Mammary epithelial cell (primary cell): ENCODE measurements at regions of chr7 and their contacts with region 1.

Region 1: DNA sequence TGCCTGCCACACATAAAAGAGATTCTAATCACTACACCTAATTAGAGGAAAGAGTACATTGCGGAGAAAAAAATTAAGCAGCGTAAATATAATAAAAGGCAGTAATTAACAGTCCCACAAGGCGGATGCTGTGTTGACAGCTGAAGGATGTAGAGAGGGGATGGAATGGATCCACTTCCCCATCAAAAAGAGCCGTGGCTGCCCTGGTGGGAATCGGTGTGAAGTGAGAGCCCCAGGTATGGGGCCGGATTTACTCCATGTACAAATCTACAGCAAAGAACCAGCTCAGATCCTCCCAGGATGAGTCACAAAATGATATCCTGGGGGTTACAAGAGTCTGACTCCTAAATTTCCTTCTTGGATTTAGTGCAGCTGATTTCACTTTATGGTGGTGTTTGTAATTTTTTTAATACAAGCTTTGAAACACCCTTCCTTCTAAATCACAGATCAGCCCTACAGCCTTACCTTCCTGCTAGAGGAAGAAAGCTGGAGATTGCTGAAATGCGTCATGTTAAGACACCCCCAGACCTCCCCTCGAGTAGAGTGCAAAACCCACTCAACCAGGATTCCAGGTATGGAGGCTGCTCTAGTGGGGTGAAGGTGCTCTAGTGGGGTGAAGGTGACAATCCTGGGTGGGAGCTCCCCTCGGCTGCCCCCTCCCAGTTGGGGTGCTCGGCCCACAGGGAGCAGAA is 398.4 kb downstream of the PLXNA4 start:
- DNase-seq: no peak
- H3K4me3 ChIP-seq: no peak overlapping the region
- H3K27ac ChIP-seq: no peak overlapping the region
- H3K4me1 ChIP-seq: no peaks in the 10 kb centered on the region
- H3K27me3 ChIP-seq: no peaks in the 10 kb centered on the region
- CTCF ChIP-seq: no peak

Region 2: DNA sequence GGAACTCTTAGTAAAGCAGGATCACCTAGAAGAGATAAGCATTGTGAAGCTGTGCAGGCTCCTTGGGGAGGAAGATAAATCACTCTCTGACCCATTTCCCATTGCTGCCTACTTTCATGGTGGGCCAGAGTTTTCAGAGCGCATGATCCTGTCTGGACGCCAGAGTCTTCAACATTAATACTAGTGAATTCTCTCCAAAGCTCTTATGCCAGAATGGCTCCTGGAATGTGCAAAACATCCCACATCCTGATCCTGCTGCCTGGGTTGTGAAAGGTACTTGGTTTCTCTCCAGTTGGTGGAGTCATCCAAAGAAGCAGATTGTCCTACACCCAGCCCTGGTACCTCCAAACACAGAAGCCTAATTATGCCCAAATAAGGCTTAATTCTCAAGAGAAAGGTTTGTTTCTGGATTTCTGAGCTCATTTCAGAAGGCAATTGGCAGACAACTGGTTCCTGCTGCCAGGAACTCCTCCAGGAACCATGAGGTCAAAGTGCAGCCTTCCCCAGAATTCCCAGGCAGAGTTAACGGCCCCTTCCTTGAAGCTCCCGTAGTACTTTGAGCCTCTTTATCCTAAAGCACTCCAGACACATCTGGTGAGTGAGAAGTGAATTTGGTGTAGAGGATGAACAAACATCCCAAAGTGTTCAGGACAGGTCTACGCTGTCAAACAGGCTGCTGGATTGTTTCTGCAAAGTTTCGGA is 96.7 kb before region 1 on chr7:
- CTCF ChIA-PET with region 1: no interaction called
- dilution Hi-C with region 1: loop called (anchors 5 kb)
- in situ Hi-C with region 1: no loop called
- intact Hi-C with region 1: no loop called
- DNase-seq: no peak
- H3K4me3 ChIP-seq: no peak overlapping the region
- H3K27ac ChIP-seq: no peak overlapping the region
- H3K4me1 ChIP-seq: no peaks in the 10 kb centered on the region
- H3K27me3 ChIP-seq: no peaks in the 10 kb centered on the region
- CTCF ChIP-seq: no peak

Region 3: DNA sequence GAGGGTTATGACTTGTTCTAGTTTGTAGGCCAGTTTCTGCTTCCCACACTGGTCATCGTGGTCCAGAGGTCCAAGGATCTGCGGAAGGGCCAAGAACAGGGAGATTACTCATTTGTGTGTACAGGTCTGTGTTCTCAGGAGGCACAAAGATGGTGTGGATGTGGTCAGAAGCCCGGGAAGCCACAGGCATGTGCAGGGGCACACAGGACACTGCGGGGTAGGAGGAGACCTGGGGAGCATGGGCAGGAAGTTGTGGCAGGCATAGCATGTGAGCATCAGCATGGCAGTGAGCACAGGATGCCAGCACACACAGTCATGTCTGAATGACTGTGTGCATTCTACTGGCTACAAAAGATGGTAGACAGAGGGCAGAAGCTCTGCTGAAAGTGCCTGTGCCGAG is 47.4 kb before region 1 on chr7:
- CTCF ChIA-PET with region 1: no interaction called
- dilution Hi-C with region 1: no loop called
- in situ Hi-C with region 1: no loop called
- intact Hi-C with region 1: no loop called
- DNase-seq: peak; percentile 67
- H3K4me3 ChIP-seq: no peak overlapping the region
- H3K27ac ChIP-seq: no peak overlapping the region
- H3K4me1 ChIP-seq: peaks cover 22% of the 10 kb centered on the region
- H3K27me3 ChIP-seq: no peaks in the 10 kb centered on the region
- CTCF ChIP-seq: no peak